H1 (cell line): ENCODE measurements at regions of chr11 and their contacts with region 1.

Region 1: GRCh38 chr11:19553683-19554333 is 158.8 kb upstream of the NAV2 start:
- DNase-seq: peak; percentile 44 to 94
- H3K4me3 ChIP-seq: no peak overlapping the region
- H3K27ac ChIP-seq: no peak overlapping the region
- H3K4me1 ChIP-seq: peaks cover 0 to 8% (median 2%) of the 10 kb centered on the region in 4 experiments; a peak in 5 of 7 replicates
- H3K27me3 ChIP-seq: no peaks in the 10 kb centered on the region; a peak in 1 of 7 replicates
- CTCF ChIP-seq: peak; percentile 64 to 91 (median 85)
- EP300 ChIP-seq: no peak
- POLR2A ChIP-seq: no peak
- RAD21 ChIP-seq: peak; percentile 96 to 99

Region 2: DNA sequence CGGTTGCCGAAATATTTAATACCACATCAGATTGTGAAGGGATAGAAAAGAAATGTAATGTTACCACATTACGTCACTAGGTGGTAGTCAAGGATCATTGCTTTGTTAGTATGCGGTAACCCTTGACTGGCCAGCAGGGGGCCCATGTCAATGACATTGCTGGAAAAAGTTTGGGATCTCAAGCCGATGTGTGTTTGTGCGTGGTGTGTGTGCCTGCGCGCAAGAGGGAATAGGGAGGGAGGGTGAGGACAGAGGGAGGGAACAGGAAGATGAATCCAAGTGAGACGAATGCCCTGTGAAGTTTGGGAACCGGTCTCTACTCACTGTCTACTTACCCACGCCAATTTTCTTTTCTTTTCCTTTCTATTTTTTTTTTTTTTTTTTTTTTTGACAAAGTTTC is 482.6 kb before region 1 on chr11:
- CTCF ChIA-PET with region 1: interaction called, 26 read pairs
- POLR2A ChIA-PET with region 1: no interaction called
- DNase-seq: peak; percentile 43 to 75
- H3K4me3 ChIP-seq: no peak overlapping the region
- H3K27ac ChIP-seq: no peak overlapping the region
- H3K4me1 ChIP-seq: peaks cover 2 to 8% (median 7%) of the 10 kb centered on the region in 4 experiments; a peak in 4 of 7 replicates
- H3K27me3 ChIP-seq: no peaks in the 10 kb centered on the region
- CTCF ChIP-seq: peak; percentile 57 to 100 (median 95)
- EP300 ChIP-seq: no peak; a peak in 1 of 3 replicates
- POLR2A ChIP-seq: no peak
- RAD21 ChIP-seq: peak; percentile 93 to 96

Region 3: DNA sequence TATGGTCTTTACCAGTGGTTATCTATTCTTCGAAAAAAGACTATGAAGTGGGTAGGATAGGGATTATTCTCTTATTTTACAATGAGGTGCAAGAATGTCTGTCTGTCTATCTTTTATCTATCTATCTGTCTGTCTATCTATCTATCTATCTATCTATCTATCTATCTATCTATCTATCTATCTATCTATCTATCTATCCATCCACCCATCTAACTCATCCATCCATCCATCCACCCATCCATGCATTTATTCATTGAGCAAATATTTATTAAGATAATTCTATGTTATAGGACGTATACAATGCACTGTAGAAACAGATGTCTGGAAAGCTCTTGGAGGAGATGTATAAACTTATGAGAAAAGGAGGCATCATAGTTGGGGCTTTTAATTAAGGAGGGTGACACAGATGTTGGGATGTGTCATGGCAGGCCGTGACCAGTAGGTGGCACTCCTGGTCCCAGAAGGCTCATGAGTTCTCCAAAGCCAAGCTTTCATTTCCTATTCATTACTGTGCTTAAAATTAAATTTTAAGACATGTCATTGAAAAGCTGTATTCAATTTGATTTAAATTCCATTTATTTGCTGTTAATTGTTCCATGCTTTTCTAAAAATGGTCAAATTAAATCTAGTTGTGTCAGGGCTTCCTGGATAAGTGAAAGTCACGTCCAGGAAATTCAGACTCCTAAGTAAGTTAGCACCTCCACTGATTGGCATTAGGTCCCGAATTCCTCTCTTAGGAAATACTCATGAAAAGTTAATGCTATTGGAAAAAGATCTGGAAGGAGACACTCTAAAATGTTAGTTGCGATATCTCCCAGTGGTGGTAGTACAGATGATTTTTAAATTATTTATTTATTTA is 294.1 kb before region 1 on chr11:
- CTCF ChIA-PET with region 1: interaction called, 65 read pairs
- POLR2A ChIA-PET with region 1: no interaction called
- DNase-seq: peak in 1 of 2 experiments; percentile 83
- H3K4me3 ChIP-seq: no peak overlapping the region
- H3K27ac ChIP-seq: no peak overlapping the region
- H3K4me1 ChIP-seq: peaks cover 0 to 5% (median 3%) of the 10 kb centered on the region in 4 experiments; a peak in 4 of 7 replicates
- H3K27me3 ChIP-seq: no peaks in the 10 kb centered on the region
- CTCF ChIP-seq: peak; percentile 66 to 89 (median 81)
- EP300 ChIP-seq: no peak
- POLR2A ChIP-seq: no peak
- RAD21 ChIP-seq: peak; percentile 78 to 80

Region 4: GRCh38 chr11:19311308-19312030 is 242.3 kb before region 1 on chr11:
- CTCF ChIA-PET with region 1: interaction called, 31 read pairs
- POLR2A ChIA-PET with region 1: no interaction called
- DNase-seq: peak in 1 of 2 experiments; percentile 89
- H3K4me3 ChIP-seq: no peak overlapping the region
- H3K27ac ChIP-seq: no peak overlapping the region
- H3K4me1 ChIP-seq: peaks cover 0 to 3% (median 0%) of the 10 kb centered on the region in 4 experiments; a peak in 1 of 7 replicates
- H3K27me3 ChIP-seq: no peaks in the 10 kb centered on the region; a peak in 1 of 7 replicates
- CTCF ChIP-seq: peak; percentile 66 to 86 (median 74)
- EP300 ChIP-seq: no peak
- POLR2A ChIP-seq: no peak
- RAD21 ChIP-seq: peak; percentile 74 to 81

Region 5: DNA sequence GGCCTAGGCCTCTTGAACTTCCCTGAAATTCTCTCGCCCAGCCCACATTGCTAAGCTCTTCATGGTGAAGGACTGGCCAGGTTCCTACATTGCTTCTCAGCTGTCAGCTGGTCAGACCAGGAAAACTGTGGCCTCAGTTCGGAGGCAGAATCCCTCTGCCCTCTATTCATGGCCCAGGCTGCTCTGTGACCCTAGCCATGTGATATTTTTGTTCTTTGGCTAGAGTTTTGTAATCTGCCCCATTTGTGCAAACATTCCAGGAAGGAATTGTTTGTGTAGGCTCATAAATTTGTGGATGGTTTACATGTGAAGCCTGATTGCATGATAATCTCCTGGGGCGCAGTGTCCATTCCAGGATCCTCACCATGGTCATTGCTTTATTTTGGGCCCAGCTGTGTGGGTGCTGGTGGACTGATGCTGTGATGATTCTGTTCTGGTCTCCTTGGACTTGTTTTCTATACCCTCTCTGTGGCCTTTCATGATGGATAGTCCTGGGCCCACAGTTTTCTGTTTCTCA is 164.0 kb before region 1 on chr11:
- CTCF ChIA-PET with region 1: no interaction called
- POLR2A ChIA-PET with region 1: no interaction called
- DNase-seq: no peak
- H3K4me3 ChIP-seq: no peak overlapping the region
- H3K27ac ChIP-seq: no peak overlapping the region
- H3K4me1 ChIP-seq: peaks cover 0 to 1% (median 0%) of the 10 kb centered on the region in 4 experiments; a peak in 2 of 7 replicates
- H3K27me3 ChIP-seq: no peaks in the 10 kb centered on the region
- CTCF ChIP-seq: no peak
- EP300 ChIP-seq: no peak
- POLR2A ChIP-seq: no peak
- RAD21 ChIP-seq: no peak

Region 6: GRCh38 chr11:19524161-19524671 is 29.6 kb before region 1 on chr11:
- CTCF ChIA-PET with region 1: interaction called, 11 read pairs
- POLR2A ChIA-PET with region 1: no interaction called
- DNase-seq: no peak
- H3K4me3 ChIP-seq: no peak overlapping the region
- H3K27ac ChIP-seq: no peak overlapping the region
- H3K4me1 ChIP-seq: no peaks in the 10 kb centered on the region; a peak in 3 of 7 replicates
- H3K27me3 ChIP-seq: no peaks in the 10 kb centered on the region
- CTCF ChIP-seq: no peak
- EP300 ChIP-seq: no peak
- POLR2A ChIP-seq: no peak
- RAD21 ChIP-seq: no peak

Region 7: DNA sequence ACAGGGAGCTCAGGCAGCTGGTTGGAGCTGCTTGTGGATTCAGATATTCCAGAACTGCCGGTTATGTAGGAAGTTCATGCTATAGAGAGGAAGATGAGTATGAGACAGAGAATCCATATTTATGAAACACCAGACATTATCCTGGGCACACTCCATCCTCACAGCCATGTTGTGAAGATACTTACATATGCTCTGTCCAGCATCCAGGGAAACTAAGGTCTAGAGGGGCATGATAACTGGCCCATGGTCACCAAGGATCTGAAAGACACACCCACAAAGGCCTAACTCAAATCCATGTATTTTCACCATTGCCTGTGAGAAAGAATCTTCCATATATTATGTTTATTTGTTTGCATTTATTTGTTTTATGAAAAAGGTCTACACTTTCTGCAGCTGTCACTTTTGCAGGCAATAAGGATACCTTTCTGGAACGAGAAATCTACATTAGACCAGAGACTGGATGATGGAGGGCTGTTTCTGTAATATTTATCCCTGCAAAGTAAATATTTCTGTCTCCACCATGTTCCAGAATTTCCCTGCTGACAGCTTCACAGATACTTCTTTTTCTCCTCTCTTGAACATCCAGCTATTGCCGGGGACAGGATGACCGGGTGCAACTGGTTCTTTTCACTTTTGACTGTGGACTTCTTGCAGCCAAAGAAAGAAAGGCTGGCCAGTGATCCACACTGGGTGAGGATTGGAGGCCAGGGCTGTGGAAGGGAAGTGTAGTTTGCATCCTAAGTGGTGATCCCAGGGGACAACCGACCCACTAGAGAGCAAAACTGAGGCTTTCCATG is 13.0 kb after region 1 on chr11:
- CTCF ChIA-PET with region 1: interaction called, 20 read pairs
- POLR2A ChIA-PET with region 1: no interaction called
- DNase-seq: no peak
- H3K4me3 ChIP-seq: no peak overlapping the region
- H3K27ac ChIP-seq: no peak overlapping the region
- H3K4me1 ChIP-seq: no peaks in the 10 kb centered on the region
- H3K27me3 ChIP-seq: no peaks in the 10 kb centered on the region; a peak in 1 of 7 replicates
- CTCF ChIP-seq: no peak
- EP300 ChIP-seq: no peak
- POLR2A ChIP-seq: no peak
- RAD21 ChIP-seq: no peak

Region 8: DNA sequence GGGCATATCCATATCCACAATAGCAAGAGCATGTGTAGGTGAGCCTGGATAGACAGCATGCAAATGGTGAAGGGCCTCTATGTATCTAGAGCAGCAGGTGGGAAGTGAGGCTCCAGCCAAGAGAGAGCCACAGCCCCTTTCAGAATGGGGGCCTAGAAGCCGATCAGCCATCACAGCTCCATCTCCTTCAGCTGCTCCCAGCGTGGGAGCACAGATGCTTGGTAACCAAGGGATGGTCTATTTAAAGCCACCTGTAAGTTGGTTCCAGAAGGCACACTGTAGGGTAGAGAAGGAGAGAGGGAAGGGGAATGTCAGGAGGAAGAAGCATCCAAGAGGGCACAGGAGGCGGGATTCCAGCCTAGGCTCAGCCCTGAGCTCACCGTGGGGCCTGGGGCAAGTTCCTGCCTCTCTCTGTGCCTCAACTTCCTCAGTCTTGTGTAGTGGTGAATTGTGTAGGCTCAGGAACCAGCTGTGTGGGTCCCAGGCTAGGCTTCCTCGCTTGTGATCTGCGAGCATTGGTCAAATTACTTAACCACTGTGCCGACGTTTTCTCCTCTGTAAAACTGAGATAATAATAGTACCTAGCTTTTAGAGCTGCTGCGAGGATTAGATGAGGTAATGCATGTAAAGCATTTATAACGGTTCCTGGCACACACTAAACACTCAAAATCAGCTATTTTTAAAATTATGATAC is 35.9 kb after region 1 on chr11:
- CTCF ChIA-PET with region 1: no interaction called
- POLR2A ChIA-PET with region 1: no interaction called
- DNase-seq: no peak
- H3K4me3 ChIP-seq: no peak overlapping the region
- H3K27ac ChIP-seq: no peak overlapping the region
- H3K4me1 ChIP-seq: no peaks in the 10 kb centered on the region
- H3K27me3 ChIP-seq: no peaks in the 10 kb centered on the region
- CTCF ChIP-seq: no peak
- EP300 ChIP-seq: no peak
- POLR2A ChIP-seq: no peak
- RAD21 ChIP-seq: no peak

Region 9: DNA sequence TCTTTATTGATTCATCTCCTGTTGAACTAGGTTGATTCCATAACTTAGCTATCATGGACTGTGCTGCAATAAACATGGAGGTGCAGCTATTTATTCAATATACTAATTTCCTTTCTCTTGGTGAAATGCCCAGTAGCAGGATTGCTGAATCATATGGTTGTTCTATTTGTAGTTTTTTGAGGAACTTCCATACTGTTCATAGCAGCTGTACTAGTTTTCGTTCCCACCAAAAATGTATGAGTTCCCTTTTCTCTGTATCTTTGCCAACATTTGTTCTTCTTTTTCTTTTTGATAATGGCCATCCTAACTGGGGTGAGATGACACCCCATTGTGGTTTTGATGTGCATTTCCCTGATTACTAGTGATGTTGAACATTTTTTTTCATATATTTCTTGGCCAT is 71.6 kb after region 1 on chr11:
- CTCF ChIA-PET with region 1: no interaction called
- POLR2A ChIA-PET with region 1: no interaction called
- DNase-seq: no peak
- H3K4me3 ChIP-seq: no peak overlapping the region
- H3K27ac ChIP-seq: no peak overlapping the region
- H3K4me1 ChIP-seq: no peaks in the 10 kb centered on the region; a peak in 1 of 7 replicates
- H3K27me3 ChIP-seq: no peaks in the 10 kb centered on the region
- CTCF ChIP-seq: no peak
- EP300 ChIP-seq: no peak
- POLR2A ChIP-seq: no peak
- RAD21 ChIP-seq: no peak

Region 10: GRCh38 chr11:19800162-19800561 is 246.4 kb after region 1 on chr11:
- CTCF ChIA-PET with region 1: interaction called, 21 read pairs
- POLR2A ChIA-PET with region 1: no interaction called
- DNase-seq: no peak
- H3K4me3 ChIP-seq: no peak overlapping the region
- H3K27ac ChIP-seq: no peak overlapping the region
- H3K4me1 ChIP-seq: peaks cover 8 to 49% (median 26%) of the 10 kb centered on the region in 4 experiments; a peak in 6 of 7 replicates
- H3K27me3 ChIP-seq: no peaks in the 10 kb centered on the region
- CTCF ChIP-seq: peak; percentile 35 to 54 (median 37)
- EP300 ChIP-seq: no peak
- POLR2A ChIP-seq: no peak
- RAD21 ChIP-seq: peak; percentile 64 to 75